ENCODE measurements at regions of chr10 and their contacts with region 1.

Region 1: DNA sequence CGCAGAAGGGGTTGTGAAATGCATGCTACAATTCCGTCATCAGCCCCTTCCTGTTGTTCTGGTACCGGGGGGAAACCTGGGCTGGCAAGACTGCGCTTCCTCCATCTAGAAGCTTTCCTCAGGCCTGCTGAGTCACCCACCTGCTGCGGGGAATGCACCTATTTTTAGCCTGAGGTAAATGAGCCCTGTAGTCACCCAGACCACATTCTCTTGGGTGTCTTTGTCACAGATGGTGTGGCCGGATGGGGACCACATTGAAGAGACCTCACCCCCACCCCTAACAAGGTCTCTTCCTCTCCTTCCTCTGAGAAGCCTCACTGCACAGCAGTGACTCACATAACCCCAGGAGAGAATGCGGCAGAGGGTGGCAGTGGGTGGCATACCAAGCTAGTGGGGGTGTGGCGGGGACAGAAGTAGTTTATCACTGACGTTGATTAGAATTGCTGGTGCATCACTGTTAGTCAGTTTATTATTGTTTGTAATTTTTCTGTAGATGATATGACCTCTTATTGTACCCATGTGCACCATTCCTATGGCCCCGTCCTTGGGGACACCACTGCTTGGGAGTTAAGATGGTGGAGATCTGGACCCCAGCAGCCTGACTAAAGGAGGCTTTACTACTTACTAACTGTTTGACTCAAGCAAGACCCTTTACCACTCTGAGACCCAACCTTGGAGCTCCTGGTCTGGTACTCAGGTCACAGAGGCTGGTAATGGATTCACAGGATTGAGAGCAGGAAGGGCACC is 83.0 kb upstream of the DUSP5 start:
- DNase-seq: peak; percentile 97
- H3K4me3 Mint-ChIP-seq: peak overlapping the region; percentile 37
- H3K27ac Mint-ChIP-seq: peak overlapping the region; percentile 91
- H3K4me1 Mint-ChIP-seq: peaks cover 87% of the 10 kb centered on the region
- H3K27me3 Mint-ChIP-seq: no peaks in the 10 kb centered on the region

Region 2: DNA sequence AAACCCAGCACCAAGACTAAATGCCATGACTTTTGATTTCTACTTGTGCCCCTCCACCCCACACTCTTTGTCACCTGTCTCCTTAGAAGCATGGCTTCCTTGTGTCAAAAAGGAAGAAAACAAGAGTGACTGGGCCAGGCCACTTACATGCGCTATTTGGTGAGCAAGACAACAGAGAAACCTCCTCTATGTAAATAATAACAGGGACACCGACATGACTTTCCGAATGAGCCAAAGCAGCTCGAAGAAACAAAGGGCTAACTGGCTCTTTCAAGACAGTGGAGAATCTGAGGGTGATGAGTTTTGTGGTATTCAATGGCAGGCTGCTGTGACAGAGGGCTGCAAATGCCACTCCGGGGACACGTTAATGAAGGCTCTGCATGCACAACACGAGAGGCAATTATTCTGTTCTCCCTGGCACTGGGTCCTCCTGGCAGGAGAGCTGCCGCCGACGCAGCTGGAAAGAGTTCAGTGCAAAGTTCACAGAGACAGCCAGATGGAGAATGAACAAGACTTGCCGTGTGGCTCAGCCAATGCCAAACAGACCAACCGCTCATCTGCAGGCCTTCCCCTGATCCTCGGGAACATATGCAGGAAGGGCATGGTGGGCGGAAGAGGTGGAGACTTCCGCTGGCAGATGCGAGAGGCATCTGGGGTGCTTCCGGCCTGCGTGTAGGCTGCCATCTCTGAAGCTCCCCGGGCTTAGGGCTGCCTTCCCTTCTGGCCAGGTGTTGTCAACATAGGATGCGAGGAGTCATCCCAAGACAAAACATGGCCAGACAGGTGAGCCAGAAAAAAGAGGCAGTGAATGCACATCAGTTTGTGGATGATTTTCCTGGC is 50.9 kb before region 1 on chr10:
- CTCF ChIA-PET with region 1: interaction called, 4 read pairs
- POLR2A ChIA-PET with region 1: interaction called, 12 read pairs
- intact Hi-C with region 1: loop called (anchors 1 kb)
- DNase-seq: peak; percentile 84
- H3K4me3 Mint-ChIP-seq: peak overlapping the region; percentile 83
- H3K27ac Mint-ChIP-seq: peak overlapping the region; percentile 98
- H3K4me1 Mint-ChIP-seq: peaks cover 86% of the 10 kb centered on the region
- H3K27me3 Mint-ChIP-seq: no peaks in the 10 kb centered on the region

Region 3: DNA sequence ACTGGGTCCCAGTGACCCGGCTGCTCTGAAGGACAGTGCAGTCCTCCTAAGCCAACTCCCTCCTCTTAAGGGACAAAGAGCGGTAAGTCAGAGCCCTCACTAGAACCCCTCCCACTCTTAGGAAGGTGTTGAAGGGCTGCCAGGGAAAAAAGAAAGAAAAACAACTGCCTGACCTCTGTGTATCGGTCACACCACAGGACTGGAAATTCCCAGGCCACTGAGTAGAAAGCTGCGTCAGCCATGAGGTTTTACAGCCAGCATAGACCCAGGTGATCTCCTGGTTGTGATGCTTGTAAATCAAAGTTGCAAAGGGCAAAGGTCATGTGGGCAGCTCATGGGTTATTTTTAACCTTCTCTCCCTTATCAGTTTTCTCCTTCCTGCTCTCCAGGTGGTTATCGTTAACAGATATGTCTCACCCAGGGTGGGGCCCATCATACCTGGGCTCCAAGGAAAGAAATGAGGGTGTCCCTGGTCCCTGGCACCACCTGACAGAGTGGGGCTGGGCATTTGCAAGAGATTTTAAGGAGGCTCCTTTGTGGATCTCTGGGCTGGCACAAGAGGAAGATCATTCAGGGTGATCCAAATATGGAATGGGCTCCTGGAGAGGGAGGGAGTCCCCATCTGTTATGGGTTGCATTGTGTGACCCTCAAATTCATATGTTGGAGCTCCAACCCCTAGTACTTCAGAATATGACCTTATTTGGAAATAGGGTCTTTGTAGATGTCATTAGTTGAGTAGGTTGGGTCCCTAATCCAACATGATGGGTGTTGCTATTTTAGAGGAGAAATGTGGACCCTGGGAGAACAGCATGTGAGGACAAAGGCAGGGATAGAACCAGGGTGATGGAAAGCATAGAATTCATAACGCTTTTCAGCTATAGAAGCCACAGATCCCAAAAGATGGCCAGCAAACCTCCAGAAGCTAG is 18.7 kb before region 1 on chr10:
- CTCF ChIA-PET with region 1: interaction called, 3 read pairs
- POLR2A ChIA-PET with region 1: interaction called, 3 read pairs
- intact Hi-C with region 1: loop called (anchors 1 kb)
- DNase-seq: peak; percentile 86
- H3K4me3 Mint-ChIP-seq: no peak overlapping the region
- H3K27ac Mint-ChIP-seq: peak overlapping the region; percentile 79
- H3K4me1 Mint-ChIP-seq: peaks cover 48% of the 10 kb centered on the region
- H3K27me3 Mint-ChIP-seq: no peaks in the 10 kb centered on the region

Region 4: DNA sequence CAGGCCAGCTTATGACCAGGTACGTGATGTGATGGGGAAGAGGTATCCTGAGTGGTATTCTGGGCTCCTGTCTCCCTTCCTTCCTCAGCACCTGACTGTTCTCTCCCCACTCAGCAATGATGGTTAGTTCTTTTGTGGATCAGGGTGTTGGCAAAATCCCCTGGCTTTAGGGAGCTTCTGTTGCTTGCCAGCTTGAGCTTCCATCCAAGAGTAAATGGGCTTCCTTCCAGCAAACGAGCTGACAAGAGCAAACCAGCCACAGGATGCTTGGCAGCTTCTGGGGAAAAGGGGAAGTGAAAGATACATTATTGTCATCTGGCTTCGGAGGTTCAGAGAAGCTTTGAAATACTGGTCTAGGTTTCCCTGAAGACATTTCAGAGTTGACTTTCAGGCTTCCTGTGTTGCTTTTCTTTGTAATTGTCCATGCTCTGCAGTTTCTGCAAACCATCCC is 88.1 kb after region 1 on chr10:
- CTCF ChIA-PET with region 1: interaction called, 4 read pairs
- POLR2A ChIA-PET with region 1: interaction called, 56 read pairs
- intact Hi-C with region 1: loop called (anchors 1 kb)
- DNase-seq: peak; percentile 58
- H3K4me3 Mint-ChIP-seq: peak overlapping the region; percentile 96
- H3K27ac Mint-ChIP-seq: peak overlapping the region; percentile 97
- H3K4me1 Mint-ChIP-seq: peaks cover 78% of the 10 kb centered on the region
- H3K27me3 Mint-ChIP-seq: no peaks in the 10 kb centered on the region

Region 5: GRCh38 chr10:110535958-110536891 is 121.5 kb after region 1 on chr10:
- CTCF ChIA-PET with region 1: no interaction called
- POLR2A ChIA-PET with region 1: interaction called, 3 read pairs
- intact Hi-C with region 1: loop called (anchors 1 kb)
- DNase-seq: peak; percentile 91
- H3K4me3 Mint-ChIP-seq: peak overlapping the region; percentile 28
- H3K27ac Mint-ChIP-seq: peak overlapping the region; percentile 79
- H3K4me1 Mint-ChIP-seq: peaks cover 30% of the 10 kb centered on the region
- H3K27me3 Mint-ChIP-seq: no peaks in the 10 kb centered on the region